ENCODE measurements at regions of chr17 and their contacts with region 1.

Region 1: GRCh38 chr17:61307905-61308886 is 91.4 kb upstream of the TBX2 start:
- DNase-seq: peak; percentile 98
- H3K4me3 ChIP-seq: no peak overlapping the region
- H3K27ac ChIP-seq: peak overlapping the region; percentile 99
- H3K27me3 ChIP-seq: no peaks in the 10 kb centered on the region
- CTCF ChIP-seq: peak; percentile 25; the same call in 1 of the 2 replicates

Region 2: DNA sequence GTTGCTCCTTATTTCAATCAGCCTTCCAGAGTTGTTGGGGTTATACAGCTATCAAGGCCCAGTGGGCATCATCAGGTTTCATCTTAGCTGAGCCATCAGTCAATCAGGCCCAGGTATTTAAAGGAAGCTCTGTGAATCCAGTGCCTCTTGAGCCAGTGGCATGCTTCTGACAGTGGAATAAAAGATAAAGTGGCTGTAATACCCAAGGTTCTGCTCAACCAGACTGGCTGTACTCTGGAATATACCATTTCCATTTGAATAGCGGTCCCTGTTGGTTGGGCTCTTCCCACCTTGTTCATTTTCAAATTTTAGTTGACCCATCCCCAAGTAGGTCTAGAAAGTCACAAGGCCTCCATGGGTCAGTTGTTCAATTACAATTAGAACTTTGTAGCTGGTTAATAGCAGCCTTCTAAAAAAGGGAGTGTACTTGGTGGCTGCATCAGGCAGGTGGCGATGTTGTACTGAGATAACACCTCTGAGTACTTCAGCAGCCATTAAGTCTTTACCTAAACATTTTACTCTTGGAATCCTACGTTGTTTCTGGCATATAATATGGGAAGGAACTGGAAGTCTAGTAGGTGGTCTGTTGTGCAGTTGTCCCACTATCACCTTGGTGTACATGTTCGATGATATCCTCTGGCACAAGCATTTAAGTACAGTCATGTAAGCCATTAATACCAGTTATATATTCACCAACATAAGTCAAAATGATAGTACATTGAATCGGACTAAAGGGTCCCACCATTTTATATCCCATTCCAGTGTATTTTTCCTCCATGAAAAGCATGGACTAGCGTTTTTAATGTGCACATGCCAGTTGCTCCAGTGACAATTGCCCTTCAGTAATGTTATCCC is 336.5 kb before region 1 on chr17:
- CTCF ChIA-PET with region 1: interaction called, 3 read pairs
- POLR2A ChIA-PET with region 1: interaction called, 17 read pairs
- DNase-seq: peak; percentile 52
- H3K4me3 ChIP-seq: no peak overlapping the region
- H3K27ac ChIP-seq: no peak overlapping the region
- H3K27me3 ChIP-seq: no peaks in the 10 kb centered on the region
- CTCF ChIP-seq: peak; percentile 79

Region 3: DNA sequence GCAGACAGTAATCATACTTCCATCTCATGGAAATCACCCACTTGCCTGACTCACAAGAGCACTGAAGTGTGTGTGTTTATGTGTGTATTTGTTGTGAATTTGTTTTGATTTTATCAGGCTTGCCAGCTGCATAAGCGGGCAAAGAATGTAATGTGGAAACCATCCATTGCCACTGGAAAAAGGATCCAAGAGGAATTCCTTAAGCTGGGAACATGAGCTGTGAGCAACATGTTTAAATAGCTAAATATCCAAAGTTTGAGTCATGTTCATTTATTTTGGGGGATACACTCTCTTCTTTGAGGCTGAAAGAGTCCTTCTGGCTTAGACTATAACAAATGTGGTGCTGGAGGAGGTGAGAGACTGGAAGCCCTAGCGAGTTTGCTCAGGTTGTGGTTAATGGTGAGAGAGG is 107.0 kb before region 1 on chr17:
- CTCF ChIA-PET with region 1: interaction called, 3 read pairs
- POLR2A ChIA-PET with region 1: interaction called, 14 read pairs
- DNase-seq: peak; percentile 97
- H3K4me3 ChIP-seq: peak overlapping the region; percentile 21
- H3K27ac ChIP-seq: peak overlapping the region; percentile 77
- H3K27me3 ChIP-seq: no peaks in the 10 kb centered on the region
- CTCF ChIP-seq: no peak

Region 4: DNA sequence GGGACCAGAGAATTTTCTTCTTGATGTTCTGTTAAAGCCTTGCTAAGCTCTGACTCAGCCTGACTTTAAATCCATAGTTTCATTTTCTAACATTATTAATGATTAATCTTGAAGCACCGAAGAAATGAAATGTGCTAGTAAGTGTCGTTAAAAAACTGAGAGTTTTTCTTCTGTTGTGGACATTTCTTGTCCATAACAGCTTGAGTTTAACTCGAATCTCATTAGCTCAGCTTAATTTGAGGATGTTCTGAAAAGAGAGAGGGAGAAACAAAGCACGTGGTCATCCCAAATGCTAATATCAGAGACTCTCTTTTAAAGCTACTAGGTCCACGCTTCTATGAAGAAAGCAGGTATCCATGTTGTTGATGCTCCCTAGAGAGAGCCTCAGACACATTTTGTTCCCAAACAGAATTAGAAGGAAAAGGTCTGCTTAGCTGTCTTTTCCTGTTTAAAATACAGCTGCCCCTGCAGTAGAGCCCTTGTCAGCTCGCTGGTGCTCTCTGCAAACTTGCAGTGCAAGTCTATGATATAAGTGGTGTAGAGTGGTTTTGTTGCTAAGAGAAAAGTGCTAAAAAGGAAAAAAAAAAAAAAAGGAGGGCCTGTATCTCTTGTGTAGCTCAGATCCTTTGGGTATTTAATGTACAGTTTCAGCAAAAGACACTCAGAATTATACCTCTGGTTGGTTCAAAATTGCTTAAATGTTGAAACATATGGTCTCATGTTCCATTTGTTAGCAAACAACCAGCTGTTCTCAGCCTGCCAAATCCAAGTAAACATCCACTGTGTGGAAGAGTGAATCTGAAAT is 99.7 kb before region 1 on chr17:
- CTCF ChIA-PET with region 1: interaction called, 5 read pairs
- POLR2A ChIA-PET with region 1: interaction called, 11 read pairs
- DNase-seq: peak; percentile 47
- H3K4me3 ChIP-seq: peak overlapping the region; percentile 1; the same call in 1 of the 2 replicates
- H3K27ac ChIP-seq: peak overlapping the region; percentile 76
- H3K27me3 ChIP-seq: no peaks in the 10 kb centered on the region
- CTCF ChIP-seq: no peak

Region 5: DNA sequence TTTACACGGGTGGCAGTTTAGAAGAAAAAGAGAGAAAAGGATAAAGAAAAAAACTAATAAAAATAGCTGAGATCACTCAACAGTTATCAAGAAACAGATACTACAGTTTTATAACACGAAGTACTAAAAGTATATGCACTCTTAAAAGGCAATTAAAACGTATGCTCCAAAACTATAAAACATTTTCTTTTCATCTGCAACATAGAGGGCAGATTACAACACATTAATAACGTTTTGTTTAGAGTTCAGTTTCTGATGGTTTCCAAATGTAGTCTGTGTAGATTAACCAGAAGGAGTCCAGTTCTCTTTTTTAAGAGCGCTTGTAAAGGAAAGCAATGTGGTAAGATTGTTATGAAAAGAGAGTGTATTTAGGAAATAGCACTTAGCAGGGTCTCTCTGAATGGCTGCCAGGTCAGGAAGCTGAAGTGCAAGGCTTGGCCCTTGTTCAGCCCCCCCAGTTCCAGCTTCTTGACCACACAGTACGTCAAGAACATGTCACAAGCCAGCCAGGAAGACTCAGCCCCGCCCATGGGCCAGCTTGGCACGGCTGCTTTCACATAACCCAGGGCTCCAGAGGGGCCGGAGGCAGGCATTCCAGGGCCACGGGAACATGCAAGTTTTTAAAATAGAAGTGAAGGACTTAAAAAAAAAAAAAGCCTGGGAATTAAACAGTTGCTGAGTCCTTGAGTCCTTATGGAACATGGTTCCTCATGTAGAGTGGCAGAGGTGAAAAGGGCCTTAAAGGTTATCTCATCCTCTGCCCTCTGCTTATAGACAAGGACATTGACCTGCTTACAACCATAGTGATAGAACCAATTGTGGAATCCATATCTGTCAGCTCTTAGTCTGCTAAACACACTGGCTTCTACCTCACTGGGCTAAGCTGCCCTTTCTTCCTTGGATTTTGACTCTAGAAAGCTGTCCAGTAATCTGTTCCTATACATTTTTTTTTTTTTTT is 56.0 kb before region 1 on chr17:
- CTCF ChIA-PET with region 1: no interaction called
- POLR2A ChIA-PET with region 1: interaction called, 16 read pairs
- DNase-seq: peak; percentile 99
- H3K4me3 ChIP-seq: no peak overlapping the region
- H3K27ac ChIP-seq: peak overlapping the region; percentile 95
- H3K27me3 ChIP-seq: no peaks in the 10 kb centered on the region
- CTCF ChIP-seq: no peak

Region 6: GRCh38 chr17:61285526-61286320 is 22.5 kb before region 1 on chr17:
- CTCF ChIA-PET with region 1: interaction called, 4 read pairs
- POLR2A ChIA-PET with region 1: interaction called, 10 read pairs
- DNase-seq: peak; percentile 85
- H3K4me3 ChIP-seq: no peak overlapping the region
- H3K27ac ChIP-seq: peak overlapping the region; percentile 91
- H3K27me3 ChIP-seq: no peaks in the 10 kb centered on the region
- CTCF ChIP-seq: no peak

Region 7: DNA sequence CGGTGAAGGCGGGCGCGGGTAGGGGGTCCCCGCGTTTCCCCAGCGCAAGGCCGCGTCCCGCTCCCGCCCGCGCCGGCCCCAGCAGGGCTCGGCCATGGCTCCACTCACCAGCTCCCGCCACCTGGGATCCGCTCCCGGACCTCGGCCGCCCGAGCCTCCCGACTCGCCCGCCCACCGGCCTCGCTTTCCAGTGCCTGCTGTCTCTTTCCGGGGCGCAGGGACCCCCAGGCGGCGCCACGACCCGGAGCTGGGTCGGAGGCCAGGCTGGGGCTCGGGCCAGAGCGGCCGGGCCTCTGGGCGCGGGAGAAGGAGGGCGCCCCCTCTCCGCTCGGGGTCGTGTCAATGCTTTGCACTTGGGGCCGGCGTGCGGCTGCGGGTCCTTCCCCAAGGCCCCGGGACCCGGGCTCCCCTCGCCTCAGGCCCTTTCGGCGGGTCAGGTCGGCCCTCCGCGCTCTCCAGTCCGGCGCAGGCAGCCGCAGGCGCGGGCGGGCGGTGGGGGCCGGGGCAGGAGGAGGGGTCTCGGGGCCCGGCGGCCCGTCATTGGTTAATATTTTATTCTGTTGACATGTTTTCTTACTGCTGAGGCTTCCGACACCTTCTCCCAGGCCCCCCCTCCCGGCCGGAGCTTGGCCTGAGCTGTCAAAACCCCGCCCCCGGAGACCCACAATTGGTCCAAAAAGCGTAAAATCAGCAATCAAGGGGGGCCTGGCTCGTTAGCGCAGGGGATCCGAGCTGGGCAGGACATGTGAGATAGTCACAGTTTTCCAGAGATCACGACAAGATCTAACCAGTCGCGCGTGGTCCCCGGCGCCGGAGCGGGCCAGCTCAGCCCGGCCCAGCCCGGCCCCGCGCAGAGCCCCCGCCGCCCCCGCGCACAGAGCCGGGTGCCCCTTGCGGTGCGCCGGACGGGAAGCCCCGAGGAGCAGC is 91.2 kb after region 1 on chr17 and contains the start of gene TBX2:
- CTCF ChIA-PET with region 1: interaction called, 4 read pairs
- POLR2A ChIA-PET with region 1: interaction called, 15 read pairs
- DNase-seq: peak; percentile 93
- H3K4me3 ChIP-seq: peak within 1 kb of the TSS; percentile 98
- H3K27ac ChIP-seq: peak within 1 kb of the TSS; percentile 90
- H3K27me3 ChIP-seq: no peaks in the 10 kb centered on the region
- CTCF ChIP-seq: no peak
- polyA plus RNA-seq, gene TBX2: 18.3 and 22.0 TPM in 2 replicates